HEK293T (cell line): ENCODE measurements at regions of chr17 and their contacts with region 1.

Region 1: DNA sequence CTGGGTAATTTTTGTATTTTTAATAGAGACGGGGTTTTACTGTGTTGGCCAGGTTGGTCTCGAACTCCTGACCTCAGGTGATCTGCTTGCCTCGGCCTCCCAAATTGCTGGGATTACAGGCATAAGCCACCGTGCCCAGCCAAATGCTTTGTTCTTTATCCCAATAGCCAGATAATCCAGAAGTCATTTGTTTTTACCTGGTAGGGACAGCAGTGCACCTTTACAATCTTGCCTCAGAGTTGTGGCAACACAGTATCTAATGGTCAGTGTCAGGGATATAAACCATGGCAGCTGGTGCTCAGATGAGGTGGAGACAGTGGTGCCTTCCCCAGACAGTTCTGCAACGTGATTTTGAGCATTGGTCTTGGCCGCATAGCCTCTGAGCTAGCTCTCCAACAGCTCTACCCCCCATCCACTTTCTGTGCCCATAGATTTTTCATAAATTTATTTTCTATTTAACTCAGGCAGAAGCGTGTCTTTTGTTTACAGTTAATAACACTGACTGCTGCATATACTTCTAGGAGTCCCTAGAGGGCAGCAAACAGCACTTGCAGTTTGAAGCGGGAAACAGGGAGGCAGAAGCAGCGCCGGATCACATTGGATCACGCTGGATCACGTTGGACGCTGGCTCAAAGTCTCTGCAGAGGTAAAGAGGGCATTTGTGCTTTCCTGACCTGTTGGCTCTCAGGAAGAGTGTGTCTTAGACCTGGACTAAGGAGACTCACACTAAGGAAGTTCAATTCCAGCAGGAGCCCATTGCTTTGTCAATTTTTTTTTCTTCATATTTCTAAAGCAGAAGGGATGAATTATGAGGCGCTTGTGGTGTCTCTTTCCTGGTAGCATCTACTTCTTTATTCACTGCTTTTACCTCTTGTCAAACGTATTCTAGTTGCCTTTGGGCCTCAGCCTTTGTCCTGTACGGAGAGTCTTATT is 5.1 kb upstream of the GGT6 start:
- DNase-seq: peak; percentile 82

Region 2: GRCh38 chr17:4449736-4450135 is 115.7 kb before region 1 on chr17:
- CTCF ChIA-PET with region 1: no interaction called
- POLR2A ChIA-PET with region 1: no interaction called
- DNase-seq: no peak

Region 3: GRCh38 chr17:4509923-4510617 is 55.4 kb before region 1 on chr17:
- CTCF ChIA-PET with region 1: no interaction called
- POLR2A ChIA-PET with region 1: no interaction called
- DNase-seq: no peak

Region 4: DNA sequence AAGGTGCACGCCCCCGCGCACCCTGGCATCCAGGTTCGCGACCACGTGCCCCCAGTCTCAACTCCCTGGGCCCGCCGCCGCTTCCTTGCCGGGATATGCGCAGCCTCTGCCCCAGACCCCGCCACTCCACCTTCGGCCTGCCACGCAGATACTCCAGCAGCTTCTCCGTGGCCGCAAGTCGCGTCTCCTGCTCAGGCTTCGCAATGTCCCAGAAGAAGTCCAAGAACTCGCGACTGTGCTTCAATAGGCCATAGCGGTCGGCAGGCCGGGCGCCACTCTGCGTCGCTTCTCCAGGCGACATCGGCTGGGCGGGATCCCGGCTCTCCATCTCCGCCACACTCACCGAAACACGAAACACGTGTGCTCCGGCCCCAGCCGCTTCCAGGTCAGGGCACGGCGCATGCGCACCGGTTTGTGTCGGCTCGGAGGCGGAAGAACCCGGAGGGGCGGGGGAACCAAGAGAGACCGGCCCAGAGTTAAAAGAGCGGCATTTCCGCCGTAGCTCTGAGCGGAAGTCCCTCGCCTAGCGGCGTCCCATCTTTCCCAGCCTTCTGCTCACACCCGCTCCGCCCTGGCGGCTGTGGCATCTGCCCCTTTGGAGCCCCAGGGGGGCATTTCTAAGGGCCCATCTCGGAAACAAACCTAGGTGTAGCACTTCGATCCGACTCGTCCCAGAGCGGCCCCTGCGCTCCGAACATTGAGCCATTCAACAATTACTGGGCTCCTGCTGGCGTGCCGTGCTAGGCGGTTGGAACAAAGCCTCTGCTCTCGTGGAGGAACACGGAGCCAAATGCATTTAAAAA is 10.3 kb before region 1 on chr17 and contains the start of gene MYBBP1A:
- CTCF ChIA-PET with region 1: interaction called, 10 read pairs
- POLR2A ChIA-PET with region 1: interaction called, 15 read pairs
- DNase-seq: peak; percentile 99

Region 5: GRCh38 chr17:4587803-4588202 is 22.3 kb after region 1 on chr17:
- CTCF ChIA-PET with region 1: interaction called, 10 read pairs
- POLR2A ChIA-PET with region 1: interaction called, 9 read pairs
- DNase-seq: no peak

Region 6: DNA sequence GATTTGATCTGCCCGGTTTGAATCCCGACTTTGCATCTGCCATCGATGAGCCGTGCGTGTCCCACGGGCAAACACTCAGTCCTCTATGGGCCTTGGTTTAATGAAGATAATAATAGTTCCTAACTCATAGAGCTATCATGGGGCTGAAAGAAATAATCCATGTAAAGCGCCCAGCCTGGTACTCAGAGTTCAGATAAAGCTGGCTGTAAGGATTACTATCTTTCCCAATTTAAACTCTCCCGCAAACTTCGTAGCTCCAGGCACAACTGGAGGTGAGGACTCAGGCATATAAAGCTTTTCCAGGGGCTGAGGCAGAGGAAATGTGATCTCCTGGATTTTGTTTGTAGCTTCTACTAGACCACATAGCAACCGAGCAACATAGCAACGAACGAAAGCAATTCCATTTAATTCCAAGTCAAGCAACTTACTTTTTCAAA is 59.7 kb after region 1 on chr17:
- CTCF ChIA-PET with region 1: interaction called, 51 read pairs
- POLR2A ChIA-PET with region 1: interaction called, 4 read pairs
- DNase-seq: no peak

Region 7: GRCh38 chr17:4733073-4733531 is 167.6 kb after region 1 on chr17:
- CTCF ChIA-PET with region 1: no interaction called
- POLR2A ChIA-PET with region 1: no interaction called
- DNase-seq: no peak